ENCODE measurements at regions of chr5 and their contacts with region 1.

Region 1: DNA sequence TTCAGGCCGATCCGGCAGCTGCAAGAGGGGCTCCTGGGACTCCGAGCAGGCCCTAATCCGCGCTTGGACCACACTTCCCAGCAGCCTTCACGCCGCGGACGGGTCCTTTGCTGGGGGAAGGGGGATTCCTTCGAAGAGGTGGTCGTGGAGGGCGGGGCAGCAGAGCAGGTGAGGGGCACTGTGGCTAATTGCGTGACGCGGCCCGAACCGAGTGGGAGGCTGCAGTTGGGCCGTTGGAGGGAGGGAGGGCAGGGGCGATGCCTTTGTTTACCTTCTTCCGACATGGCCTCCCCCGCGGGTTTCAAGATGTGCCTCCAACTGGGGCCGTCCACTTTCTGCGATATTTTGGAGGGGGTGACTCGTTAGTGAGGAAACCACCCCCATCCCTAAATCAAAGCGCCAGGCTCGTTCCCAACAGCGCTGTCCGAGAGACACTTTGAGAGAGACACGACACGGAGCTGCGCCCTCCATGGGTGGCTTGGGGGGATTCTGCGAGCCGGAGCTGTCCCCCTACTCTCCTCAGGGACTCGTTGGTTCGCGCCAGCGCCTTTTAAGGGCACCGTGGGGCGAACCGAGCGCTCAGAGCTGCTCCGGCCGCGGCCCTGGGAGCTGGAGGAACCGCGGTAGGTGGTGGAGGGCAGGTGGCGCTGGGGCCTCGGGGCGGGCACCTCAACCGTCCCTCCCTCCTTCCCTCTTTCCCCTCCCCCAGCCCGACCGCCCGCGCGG is at the start of gene FAM53C:
- DNase-seq: peak; percentile 84
- H3K4me3 ChIP-seq: peak within 1 kb of the TSS; percentile 91
- H3K27ac ChIP-seq: peak within 1 kb of the TSS; percentile 98
- H3K27me3 ChIP-seq: no peaks in the 10 kb centered on the region
- CTCF ChIP-seq: no peak
- polyA plus RNA-seq, gene FAM53C: 35.6 and 35.9 TPM in 2 replicates

Region 2: DNA sequence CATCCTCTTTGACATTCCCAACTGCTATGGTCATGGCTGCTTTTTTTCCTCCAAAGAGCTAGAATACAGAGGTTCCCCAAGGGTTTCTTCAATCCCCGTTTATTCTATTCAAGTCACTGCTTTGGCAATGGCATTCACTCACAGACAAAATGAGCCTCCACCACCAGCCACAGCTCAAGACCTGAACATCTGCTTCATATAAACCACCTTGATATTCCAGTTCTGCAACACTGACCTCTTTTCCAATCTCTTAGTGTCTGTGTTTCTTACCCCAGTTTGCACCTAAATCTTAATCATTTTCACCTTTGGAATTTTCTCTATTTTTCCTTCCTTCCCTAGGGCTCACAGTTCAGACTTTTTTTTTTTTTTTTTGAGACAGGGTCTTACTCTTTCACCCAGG is 359.2 kb before region 1 on chr5:
- CTCF ChIA-PET with region 1: interaction called, 11 read pairs
- POLR2A ChIA-PET with region 1: no interaction called
- DNase-seq: no peak
- H3K4me3 ChIP-seq: no peak overlapping the region
- H3K27ac ChIP-seq: no peak overlapping the region
- H3K27me3 ChIP-seq: no peaks in the 10 kb centered on the region
- CTCF ChIP-seq: no peak

Region 3: GRCh38 chr5:138305797-138306196 is 32.1 kb before region 1 on chr5:
- CTCF ChIA-PET with region 1: no interaction called
- POLR2A ChIA-PET with region 1: no interaction called
- DNase-seq: no peak
- H3K4me3 ChIP-seq: no peak overlapping the region
- H3K27ac ChIP-seq: no peak overlapping the region
- H3K27me3 ChIP-seq: no peaks in the 10 kb centered on the region
- CTCF ChIP-seq: no peak

Measured in AG04450 (cell line).